Colonic mucosa (tissue), 4 donors: ENCODE measurements at regions of chr4 and their contacts with region 1.

Region 1: GRCh38 chr4:137531986-137532868 is at the start of gene PCDH18:
- DNase-seq: peak; percentile 73
- H3K4me3 ChIP-seq: peak within 1 kb of the TSS; percentile 34
- H3K27ac ChIP-seq: peak within 1 kb of the TSS; percentile 51
- H3K4me1 ChIP-seq: no peaks in the 10 kb centered on the region
- H3K27me3 ChIP-seq: no peaks in the 10 kb centered on the region
- CTCF ChIP-seq: no peak
- total RNA-seq, gene PCDH18: 6.3 to 8.8 TPM

Region 2: GRCh38 chr4:137705171-137705783 is 173.1 kb after region 1 on chr4:
- intact Hi-C with region 1: loop called (anchors 10 kb)
- DNase-seq: no peak
- H3K4me3 ChIP-seq: no peak overlapping the region
- H3K27ac ChIP-seq: peak overlapping the region; percentile 31
- H3K4me1 ChIP-seq: no peaks in the 10 kb centered on the region
- H3K27me3 ChIP-seq: no peaks in the 10 kb centered on the region
- CTCF ChIP-seq: no peak